CD4-positive, alpha-beta T cell (primary cell): ENCODE measurements at regions of chr11 and their contacts with region 1.

Region 1: DNA sequence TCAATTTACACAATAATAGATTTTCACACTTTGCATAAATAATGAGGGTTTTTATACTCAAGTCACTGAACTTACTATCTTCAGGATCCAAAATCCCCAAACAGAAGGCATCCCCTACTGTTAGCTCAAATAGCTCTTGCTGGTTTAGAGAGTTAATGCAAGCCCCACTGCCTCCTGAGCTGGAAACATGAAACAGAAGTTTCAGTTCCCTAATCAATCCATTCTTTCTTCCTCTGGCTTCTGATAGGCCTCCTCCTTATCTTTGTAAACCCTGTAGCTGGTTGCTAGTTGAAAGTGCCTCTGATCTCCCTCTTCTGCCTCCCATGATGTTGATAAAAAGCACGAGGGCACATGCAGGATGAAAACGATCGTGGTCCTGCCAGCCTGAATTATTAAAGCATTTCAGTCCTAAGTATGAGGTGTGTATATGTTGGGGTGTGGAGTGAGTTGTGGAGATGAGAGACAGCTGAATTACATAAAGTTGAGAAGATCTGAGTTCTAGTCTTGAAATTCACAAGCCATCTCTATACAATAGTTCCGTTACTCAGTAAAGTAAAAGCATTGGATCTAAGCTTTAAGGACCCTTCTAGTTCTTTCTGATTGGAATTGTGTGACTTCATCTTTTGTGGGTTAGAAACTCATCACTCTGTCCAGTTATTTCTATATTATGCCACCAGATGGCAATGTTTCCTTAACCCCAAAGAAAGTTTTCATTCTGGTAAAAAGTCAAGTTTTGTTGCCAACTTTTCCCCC is 35.0 kb upstream of the EHF start:
- DNase-seq: peak in 3 of 14 experiments; percentile 43 to 60 (median 59)
- ATAC-seq: peak; percentile 37
- H3K4me3 ChIP-seq: no peak overlapping the region
- H3K4me3 Mint-ChIP-seq: no peak overlapping the region
- H3K27ac ChIP-seq: no peak overlapping the region
- H3K27ac Mint-ChIP-seq: no peak overlapping the region
- H3K4me1 ChIP-seq: no peaks in the 10 kb centered on the region
- H3K4me1 Mint-ChIP-seq: no peaks in the 10 kb centered on the region
- H3K27me3 ChIP-seq: peaks cover 0 to 3% of the 10 kb centered on the region in 2 experiments
- H3K27me3 Mint-ChIP-seq: peaks cover 28% of the 10 kb centered on the region
- CTCF ChIP-seq: peak; percentile 71

Region 2: GRCh38 chr11:34840736-34841386 is 254.9 kb after region 1 on chr11:
- CTCF ChIA-PET with region 1: no interaction called
- POLR2A ChIA-PET with region 1: no interaction called
- intact Hi-C with region 1: no loop called
- DNase-seq: peak in 5 of 14 experiments; percentile 4 to 62 (median 27)
- ATAC-seq: peak; percentile 44
- H3K4me3 ChIP-seq: no peak overlapping the region
- H3K4me3 Mint-ChIP-seq: no peak overlapping the region
- H3K27ac ChIP-seq: no peak overlapping the region
- H3K27ac Mint-ChIP-seq: no peak overlapping the region
- H3K4me1 ChIP-seq: no peaks in the 10 kb centered on the region
- H3K4me1 Mint-ChIP-seq: no peaks in the 10 kb centered on the region
- H3K27me3 ChIP-seq: peaks cover 0 to 7% of the 10 kb centered on the region in 2 experiments
- H3K27me3 Mint-ChIP-seq: peaks cover 19% of the 10 kb centered on the region
- CTCF ChIP-seq: peak; percentile 57

Region 3: GRCh38 chr11:34890812-34891211 is 304.9 kb after region 1 on chr11:
- CTCF ChIA-PET with region 1: no interaction called
- POLR2A ChIA-PET with region 1: no interaction called
- intact Hi-C with region 1: loop called (anchors 1 to 2 kb)
- DNase-seq: peak in 3 of 14 experiments; percentile 15 to 32 (median 31)
- ATAC-seq: no peak
- H3K4me3 ChIP-seq: no peak overlapping the region
- H3K4me3 Mint-ChIP-seq: no peak overlapping the region
- H3K27ac ChIP-seq: no peak overlapping the region
- H3K27ac Mint-ChIP-seq: no peak overlapping the region
- H3K4me1 ChIP-seq: no peaks in the 10 kb centered on the region
- H3K4me1 Mint-ChIP-seq: no peaks in the 10 kb centered on the region
- H3K27me3 ChIP-seq: no peaks in the 10 kb centered on the region
- H3K27me3 Mint-ChIP-seq: no peaks in the 10 kb centered on the region
- CTCF ChIP-seq: peak; percentile 22

Region 4: GRCh38 chr11:34977089-34977906 is 391.4 kb after region 1 on chr11:
- CTCF ChIA-PET with region 1: no interaction called
- POLR2A ChIA-PET with region 1: no interaction called
- intact Hi-C with region 1: loop called in 1 of 2 experiments (anchors 10 kb)
- DNase-seq: no peak
- ATAC-seq: no peak
- H3K4me3 ChIP-seq: no peak overlapping the region
- H3K4me3 Mint-ChIP-seq: no peak overlapping the region
- H3K27ac ChIP-seq: no peak overlapping the region
- H3K27ac Mint-ChIP-seq: no peak overlapping the region
- H3K4me1 ChIP-seq: no peaks in the 10 kb centered on the region
- H3K4me1 Mint-ChIP-seq: peaks cover 17% of the 10 kb centered on the region
- H3K27me3 ChIP-seq: no peaks in the 10 kb centered on the region
- H3K27me3 Mint-ChIP-seq: no peaks in the 10 kb centered on the region
- CTCF ChIP-seq: no peak

Region 5: GRCh38 chr11:35412285-35412684 is 826.4 kb after region 1 on chr11:
- CTCF ChIA-PET with region 1: no interaction called
- POLR2A ChIA-PET with region 1: no interaction called
- intact Hi-C with region 1: loop called in 1 of 2 experiments (anchors 5 kb)
- DNase-seq: no peak
- ATAC-seq: no peak
- H3K4me3 ChIP-seq: no peak overlapping the region
- H3K4me3 Mint-ChIP-seq: no peak overlapping the region
- H3K27ac ChIP-seq: no peak overlapping the region
- H3K27ac Mint-ChIP-seq: no peak overlapping the region
- H3K4me1 ChIP-seq: no peaks in the 10 kb centered on the region
- H3K4me1 Mint-ChIP-seq: no peaks in the 10 kb centered on the region
- H3K27me3 ChIP-seq: peaks cover 16 to 48% of the 10 kb centered on the region in 2 experiments
- H3K27me3 Mint-ChIP-seq: peaks cover 57% of the 10 kb centered on the region
- CTCF ChIP-seq: peak; percentile 39

Region 6: DNA sequence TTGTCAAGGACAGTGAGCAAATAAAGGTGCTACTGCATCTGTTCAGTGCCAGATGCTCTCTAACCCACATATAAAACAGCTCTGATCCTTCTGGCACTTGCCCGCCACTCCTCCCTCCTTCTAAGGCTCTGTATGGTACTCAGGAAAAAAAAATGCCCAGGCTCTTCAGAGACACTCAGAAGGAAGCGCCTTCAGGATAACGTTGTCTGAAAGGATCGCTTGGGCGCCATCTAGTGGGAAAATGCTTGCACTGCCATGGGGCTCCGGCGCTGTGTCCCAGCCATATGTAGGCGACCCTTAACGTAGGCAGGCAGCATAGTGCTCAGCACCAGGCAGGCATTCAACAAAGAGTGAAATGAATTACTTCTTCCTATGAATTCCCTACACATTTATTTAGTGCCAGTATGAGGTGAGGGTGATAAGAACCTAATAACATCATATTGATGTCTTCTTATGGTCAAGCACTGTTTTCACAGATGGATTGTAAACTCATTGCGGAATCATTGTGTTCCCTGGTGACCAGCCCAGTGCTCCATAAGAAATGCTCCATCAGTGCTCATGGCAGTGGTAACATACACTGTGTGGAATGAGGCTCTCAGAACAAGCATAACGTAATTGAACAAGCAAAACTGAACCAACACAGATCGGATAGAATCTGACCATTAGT is 899.9 kb after region 1 on chr11:
- CTCF ChIA-PET with region 1: no interaction called
- POLR2A ChIA-PET with region 1: no interaction called
- intact Hi-C with region 1: loop called (anchors 1 to 2 kb)
- DNase-seq: peak; percentile 49 to 80 (median 63)
- ATAC-seq: peak; percentile 70
- H3K4me3 ChIP-seq: no peak overlapping the region
- H3K4me3 Mint-ChIP-seq: no peak overlapping the region
- H3K27ac ChIP-seq: no peak overlapping the region
- H3K27ac Mint-ChIP-seq: no peak overlapping the region
- H3K4me1 ChIP-seq: peaks cover 4% of the 10 kb centered on the region
- H3K4me1 Mint-ChIP-seq: no peaks in the 10 kb centered on the region
- H3K27me3 ChIP-seq: peaks cover 4 to 26% of the 10 kb centered on the region in 2 experiments
- H3K27me3 Mint-ChIP-seq: peaks cover 66% of the 10 kb centered on the region
- CTCF ChIP-seq: peak; percentile 95